ENCODE measurements at regions of chr5 and their contacts with region 1.

Region 1: DNA sequence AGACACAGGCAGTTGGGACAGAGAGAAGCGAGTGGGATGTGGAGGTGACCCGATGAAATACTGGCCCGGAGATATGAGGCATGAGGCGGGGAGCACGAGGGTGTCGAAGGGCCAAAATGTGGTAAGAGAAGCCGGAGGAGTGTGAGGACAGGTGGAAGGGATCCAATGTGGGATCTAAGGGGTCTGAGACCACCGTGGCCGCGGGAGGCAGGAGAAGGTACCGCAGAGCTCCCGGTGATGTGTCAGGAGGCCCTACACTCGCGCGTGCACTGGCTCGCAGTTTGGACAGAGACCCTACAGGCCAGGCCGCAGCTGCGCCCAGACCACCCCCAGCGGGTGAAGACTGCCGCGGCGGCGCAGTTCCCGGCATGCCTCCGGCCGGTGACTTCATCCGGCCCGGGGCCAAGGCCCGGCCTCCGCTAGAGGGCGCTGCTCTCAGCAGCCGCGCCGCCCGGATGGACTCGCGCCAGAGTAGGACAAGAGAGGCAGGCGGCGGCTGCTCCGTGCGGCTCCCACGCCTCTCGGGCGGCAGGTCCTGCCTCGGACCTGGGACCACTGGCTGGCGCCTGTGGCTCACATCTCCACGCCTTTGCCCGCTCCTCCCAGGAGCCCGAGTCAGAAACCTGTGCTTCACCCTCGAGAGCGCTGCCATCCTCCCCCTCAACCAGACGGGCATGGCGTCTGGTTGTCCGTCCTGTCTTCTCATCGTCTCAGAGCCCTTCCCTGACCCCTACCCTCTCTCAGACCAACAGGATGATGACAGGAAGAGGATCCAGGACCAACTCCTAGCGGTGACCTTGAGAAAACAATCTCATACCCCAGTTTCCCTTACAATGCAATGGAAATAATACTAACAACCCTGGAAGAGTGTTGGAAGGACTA is 35.4 kb upstream of the STING1 start:
- DNase-seq: peak; percentile 91
- H3K4me3 Mint-ChIP-seq: peak overlapping the region; percentile 73
- H3K27ac Mint-ChIP-seq: peak overlapping the region; percentile 90
- H3K4me1 Mint-ChIP-seq: peaks cover 30% of the 10 kb centered on the region
- H3K27me3 Mint-ChIP-seq: peaks cover 23% of the 10 kb centered on the region

Region 2: DNA sequence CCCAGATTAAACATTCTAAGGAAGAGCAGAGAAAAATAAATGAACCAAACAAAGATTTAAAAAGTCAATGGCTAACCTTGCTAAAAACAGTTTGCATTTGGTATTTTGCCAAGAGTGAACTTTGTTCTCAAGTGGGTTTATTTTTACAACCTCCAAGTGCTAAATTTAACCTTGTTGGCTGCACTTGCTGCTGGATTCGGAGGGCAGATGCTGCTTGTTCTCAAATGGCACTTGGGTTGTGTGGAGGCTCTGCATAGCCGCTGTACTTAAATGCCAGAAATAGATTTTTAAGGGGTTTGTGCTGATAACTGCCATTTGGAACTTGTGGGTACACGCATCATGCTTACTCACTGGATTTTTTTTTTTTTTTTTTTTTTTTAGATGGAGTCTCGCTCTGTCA is 100.7 kb before region 1 on chr5:
- CTCF ChIA-PET with region 1: interaction called, 436 read pairs
- DNase-seq: peak; percentile 20
- H3K4me3 Mint-ChIP-seq: no peak overlapping the region
- H3K27ac Mint-ChIP-seq: no peak overlapping the region
- H3K4me1 Mint-ChIP-seq: peaks cover 60% of the 10 kb centered on the region
- H3K27me3 Mint-ChIP-seq: no peaks in the 10 kb centered on the region

Region 3: GRCh38 chr5:139458580-139459406 is 59.1 kb before region 1 on chr5:
- CTCF ChIA-PET with region 1: interaction called, 20 read pairs
- DNase-seq: peak; percentile 90
- H3K4me3 Mint-ChIP-seq: peak overlapping the region; percentile 48
- H3K27ac Mint-ChIP-seq: peak overlapping the region; percentile 91
- H3K4me1 Mint-ChIP-seq: peaks cover 74% of the 10 kb centered on the region
- H3K27me3 Mint-ChIP-seq: peaks cover 10% of the 10 kb centered on the region

Region 4: DNA sequence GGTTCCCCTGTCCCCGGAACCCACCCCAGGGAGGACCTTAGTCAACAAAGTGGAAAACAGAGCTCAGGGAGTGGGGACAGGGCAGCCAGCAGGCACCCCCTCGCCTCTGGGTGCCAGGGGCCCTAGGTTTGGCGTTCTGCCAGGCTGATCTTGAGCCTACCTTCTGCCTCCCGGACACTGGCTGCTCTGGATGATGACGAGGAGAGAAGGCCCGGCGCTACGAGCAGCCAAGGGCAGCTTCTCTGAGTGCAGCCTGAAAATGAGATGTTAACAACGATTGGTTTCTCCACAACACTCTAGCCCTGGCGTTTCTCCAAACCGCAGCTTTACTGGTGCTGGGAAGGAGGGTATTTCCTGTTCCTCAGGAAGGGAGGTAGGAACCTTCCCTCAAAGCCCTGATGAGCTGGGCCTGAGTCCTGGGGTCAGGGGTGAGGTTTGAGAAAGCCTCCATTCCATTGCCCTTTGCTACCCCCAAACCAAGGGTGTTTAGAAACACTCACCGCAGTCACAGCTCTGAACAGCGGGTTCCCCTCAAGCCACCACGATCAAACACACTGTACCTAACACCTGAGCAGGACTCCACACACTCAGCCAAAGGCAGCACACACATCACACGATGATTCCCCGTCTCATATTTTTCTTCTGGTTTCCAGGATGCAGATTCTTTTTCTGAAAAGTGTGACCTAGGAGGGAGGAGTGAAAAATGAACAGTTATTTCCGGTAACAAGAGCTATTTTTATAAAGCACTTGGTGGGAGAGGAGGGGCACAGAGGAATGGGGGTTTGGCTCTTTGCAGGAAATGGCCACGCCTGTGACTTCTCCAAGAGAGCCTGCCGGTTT is 35.7 kb before region 1 on chr5 and contains the start of gene STING1:
- CTCF ChIA-PET with region 1: interaction called, 43 read pairs
- DNase-seq: peak; percentile 80
- H3K4me3 Mint-ChIP-seq: peak within 1 kb of the TSS; percentile 87
- H3K27ac Mint-ChIP-seq: peak within 1 kb of the TSS; percentile 97
- H3K4me1 Mint-ChIP-seq: peaks cover 47% of the 10 kb centered on the region
- H3K27me3 Mint-ChIP-seq: no peaks in the 10 kb centered on the region

Region 5: GRCh38 chr5:139492700-139493192 is 25.2 kb before region 1 on chr5:
- CTCF ChIA-PET with region 1: interaction called, 27 read pairs
- DNase-seq: no peak
- H3K4me3 Mint-ChIP-seq: peak overlapping the region; percentile 33
- H3K27ac Mint-ChIP-seq: peak overlapping the region; percentile 47
- H3K4me1 Mint-ChIP-seq: peaks cover 27% of the 10 kb centered on the region
- H3K27me3 Mint-ChIP-seq: no peaks in the 10 kb centered on the region

Measured in activated naive CD4-positive, alpha-beta T cell treated with anti-CD3 and anti-CD28 coated beads, Interleukin-2, amount 10 ng/mL, durations not matched to agents 7 days and 5 days (primary cell).